ENCODE measurements at regions of chrX and their contacts with region 1.

Region 1: GRCh38 chrX:18047491-18047890 is 173.2 kb downstream of the BEND2 start:
- DNase-seq: no peak
- ATAC-seq: no peak

Region 2: GRCh38 chrX:19070555-19071049 is 1023.1 kb after region 1 on chrX:
- intact Hi-C with region 1: loop called (anchors 10 kb)
- DNase-seq: no peak
- ATAC-seq: no peak